Mammary epithelial cell (primary cell): ENCODE measurements at regions of chr14 and their contacts with region 1.

Region 1: DNA sequence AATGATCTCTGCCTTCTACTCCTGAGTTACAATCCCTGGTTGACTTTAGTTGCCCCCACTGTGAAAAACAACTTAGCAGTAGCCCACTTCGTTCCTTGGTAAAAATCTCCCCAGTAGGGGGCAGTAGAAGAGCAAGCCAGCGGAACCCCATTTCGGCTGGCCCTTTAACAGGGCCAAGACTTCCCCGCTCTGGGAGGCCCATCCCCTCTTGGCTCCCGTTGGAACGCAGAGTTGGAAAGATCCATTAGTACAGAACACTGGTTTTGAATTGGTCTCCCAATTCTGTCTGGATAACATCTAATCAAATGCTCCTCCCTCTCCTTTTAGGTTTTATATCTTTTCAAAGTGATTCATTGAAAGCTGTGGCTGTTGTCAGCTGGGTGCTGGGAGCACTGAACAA is 1133.3 kb downstream of the BCL11B start:
- DNase-seq: peak; percentile 25
- H3K4me3 ChIP-seq: no peak overlapping the region
- H3K27ac ChIP-seq: no peak overlapping the region
- H3K4me1 ChIP-seq: peaks cover 4% of the 10 kb centered on the region
- H3K27me3 ChIP-seq: no peaks in the 10 kb centered on the region
- CTCF ChIP-seq: peak; percentile 49 to 82

Region 2: GRCh38 chr14:98444077-98444476 is 305.4 kb after region 1 on chr14:
- CTCF ChIA-PET with region 1: no interaction called
- dilution Hi-C with region 1: no loop called
- in situ Hi-C with region 1: no loop called
- intact Hi-C with region 1: loop called (anchors 5 kb)
- DNase-seq: no peak
- H3K4me3 ChIP-seq: no peak overlapping the region
- H3K27ac ChIP-seq: no peak overlapping the region
- H3K4me1 ChIP-seq: no peaks in the 10 kb centered on the region
- H3K27me3 ChIP-seq: no peaks in the 10 kb centered on the region
- CTCF ChIP-seq: no peak

Region 3: DNA sequence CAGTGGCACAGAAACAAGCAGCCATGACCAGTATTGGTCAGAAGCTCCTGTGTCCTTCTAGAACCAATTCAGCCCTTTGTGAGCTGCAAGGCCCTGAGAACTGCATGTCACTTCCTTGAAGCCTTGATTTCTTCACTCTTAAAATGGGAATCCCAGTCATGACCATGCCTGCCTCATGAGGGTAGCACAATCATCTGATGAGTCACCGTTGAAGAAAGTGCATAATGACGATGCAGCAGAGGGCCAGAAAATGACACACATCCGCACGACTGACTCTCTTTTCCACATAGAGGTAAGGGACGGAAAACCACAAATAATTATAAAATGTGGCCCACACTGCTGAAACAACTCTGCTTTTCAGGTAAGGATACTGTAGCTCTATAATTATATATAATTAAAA is 355.9 kb after region 1 on chr14:
- CTCF ChIA-PET with region 1: no interaction called
- dilution Hi-C with region 1: no loop called
- in situ Hi-C with region 1: no loop called
- intact Hi-C with region 1: loop called (anchors 5 kb)
- DNase-seq: peak; percentile 94
- H3K4me3 ChIP-seq: no peak overlapping the region
- H3K27ac ChIP-seq: peak overlapping the region; percentile 87
- H3K4me1 ChIP-seq: peaks cover 39% of the 10 kb centered on the region
- H3K27me3 ChIP-seq: no peaks in the 10 kb centered on the region
- CTCF ChIP-seq: peak in 1 of 2 donors; percentile 23

Region 4: DNA sequence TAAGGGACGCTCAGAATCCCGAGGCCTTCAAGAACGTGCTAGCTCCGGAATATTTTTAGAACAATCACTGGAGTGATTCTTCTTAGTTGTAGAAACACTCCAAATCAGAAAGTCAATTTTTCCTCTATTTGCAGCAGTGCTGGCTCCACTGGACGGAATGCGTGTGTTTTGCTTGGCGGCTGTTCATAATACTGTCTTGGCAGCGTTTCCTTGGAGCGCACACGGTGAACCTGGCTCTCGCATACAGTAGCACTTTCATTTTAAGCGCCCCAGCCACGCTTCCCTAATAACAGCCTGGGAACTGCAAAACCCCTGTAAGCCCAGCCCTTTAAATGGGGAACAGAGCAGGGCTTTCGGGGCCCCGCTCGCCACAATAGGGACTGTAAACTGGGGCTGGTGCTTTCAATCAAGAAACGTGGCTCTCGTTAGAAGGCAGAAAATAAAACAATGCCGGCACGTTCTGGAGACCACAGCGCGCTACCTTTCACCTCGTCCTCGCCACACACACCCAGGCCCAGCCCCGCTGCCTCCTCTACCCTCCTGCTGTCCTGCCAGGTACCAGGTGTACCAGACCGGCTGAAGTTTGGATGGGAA is 1053.5 kb after region 1 on chr14:
- CTCF ChIA-PET with region 1: no interaction called
- dilution Hi-C with region 1: no loop called
- in situ Hi-C with region 1: no loop called
- intact Hi-C with region 1: loop called (anchors 5 kb)
- DNase-seq: peak; percentile 51
- H3K4me3 ChIP-seq: peak overlapping the region; percentile 45 to 60 (median 46)
- H3K27ac ChIP-seq: no peak overlapping the region
- H3K4me1 ChIP-seq: peaks cover 10% of the 10 kb centered on the region
- H3K27me3 ChIP-seq: no peaks in the 10 kb centered on the region
- CTCF ChIP-seq: no peak

Region 5: DNA sequence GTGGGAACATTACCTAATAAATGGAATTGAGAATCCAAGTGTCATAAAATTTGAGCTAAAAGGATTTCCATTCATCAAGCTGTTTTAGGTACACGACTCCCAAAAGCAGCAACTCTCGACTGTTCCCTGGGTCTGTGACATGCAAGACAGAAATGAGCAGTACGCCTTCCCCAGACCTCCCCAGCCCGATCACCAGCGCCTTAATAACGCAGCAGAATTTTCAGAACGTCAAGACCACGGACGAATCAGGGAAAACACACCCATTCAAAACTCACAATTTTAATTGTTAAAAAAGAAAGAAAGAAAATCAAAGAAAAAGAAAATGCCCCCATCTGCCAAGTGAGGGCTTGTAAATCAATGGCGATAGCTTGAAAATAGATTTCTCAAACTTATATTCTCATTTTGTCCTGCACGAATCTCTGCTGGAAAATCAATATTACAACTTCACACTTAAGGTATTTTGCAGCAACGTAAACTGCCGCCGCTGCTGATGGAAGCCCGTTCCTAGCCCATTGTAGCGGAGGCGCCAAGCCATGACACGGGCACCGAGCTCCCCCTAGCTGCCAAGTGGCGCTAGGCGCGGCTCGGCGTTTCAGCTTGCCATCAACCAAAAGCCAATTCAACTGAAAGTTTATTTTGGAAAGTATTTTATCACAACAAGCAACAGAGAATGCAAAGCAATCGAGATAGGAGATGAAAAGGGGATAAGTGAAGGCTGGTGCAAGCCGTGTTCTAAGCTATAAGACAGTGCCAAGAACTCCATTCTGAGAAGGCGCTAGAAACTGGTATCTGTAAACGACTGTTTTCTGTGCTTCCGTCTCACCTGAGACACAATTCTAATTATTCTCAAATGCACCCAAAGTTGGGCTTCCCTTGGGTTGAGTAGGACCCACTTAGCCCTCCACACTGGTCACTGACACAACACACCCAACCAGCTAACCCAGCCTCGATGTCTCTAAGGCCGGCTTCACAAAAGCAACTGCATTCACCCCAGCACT is 1127.8 kb after region 1 on chr14:
- CTCF ChIA-PET with region 1: no interaction called
- dilution Hi-C with region 1: no loop called
- in situ Hi-C with region 1: loop called (anchors 25 kb)
- intact Hi-C with region 1: loop called (anchors 1 kb)
- DNase-seq: peak; percentile 57
- H3K4me3 ChIP-seq: peak overlapping the region in 1 of 3 experiments; percentile 12
- H3K27ac ChIP-seq: no peak overlapping the region
- H3K4me1 ChIP-seq: no peaks in the 10 kb centered on the region
- H3K27me3 ChIP-seq: no peaks in the 10 kb centered on the region
- CTCF ChIP-seq: peak; percentile 94 to 99